Cardiac septum (tissue), 1 donor: ENCODE measurements at regions of chr12 and their contacts with region 1.

Region 1: GRCh38 chr12:96399919-96400797 is at the start of gene CDK17:
- DNase-seq: peak; percentile 94
- total RNA-seq, gene CDK17: 22.9 TPM

Region 2: DNA sequence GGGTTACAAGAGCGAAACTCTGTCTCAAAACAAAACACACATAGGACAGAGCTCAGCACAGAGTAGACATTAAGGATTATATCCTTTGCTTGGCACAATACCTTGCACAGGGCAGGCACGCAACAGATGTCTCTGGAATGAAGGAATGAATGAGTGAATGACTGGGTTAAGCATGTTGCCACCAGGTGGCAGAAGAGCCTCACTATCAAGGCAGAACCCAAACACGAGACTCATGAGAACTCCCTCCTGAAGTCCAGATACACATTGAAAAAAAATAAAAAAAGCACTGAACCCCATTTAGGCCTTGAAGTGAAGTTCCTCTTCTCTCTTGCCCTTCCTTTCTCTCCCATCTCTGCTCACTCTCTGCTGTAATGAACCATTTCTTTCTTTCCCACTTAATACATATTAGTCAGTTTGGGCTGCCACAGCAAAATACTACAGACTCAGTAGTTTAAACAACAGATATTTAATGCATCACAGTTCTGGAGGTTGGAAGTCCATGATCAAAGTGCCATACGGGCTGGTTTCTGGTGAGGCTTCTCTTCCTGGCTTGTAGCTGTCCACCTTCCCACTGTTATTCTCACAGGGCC is 338.2 kb before region 1 on chr12:
- intact Hi-C with region 1: loop called (anchors 10 kb)
- DNase-seq: no peak

Region 3: GRCh38 chr12:96237465-96238077 is 162.6 kb before region 1 on chr12:
- intact Hi-C with region 1: loop called (anchors 5 kb)
- DNase-seq: no peak

Region 4: GRCh38 chr12:96489103-96490056 is 89.2 kb after region 1 on chr12 and contains the start of gene CFAP54:
- intact Hi-C with region 1: loop called (anchors 5 kb)
- DNase-seq: peak; percentile 96
- total RNA-seq, gene CFAP54: 0.48 TPM